Panc1 (cell line): ENCODE measurements at regions of chrX and their contacts with region 1.

Region 1: DNA sequence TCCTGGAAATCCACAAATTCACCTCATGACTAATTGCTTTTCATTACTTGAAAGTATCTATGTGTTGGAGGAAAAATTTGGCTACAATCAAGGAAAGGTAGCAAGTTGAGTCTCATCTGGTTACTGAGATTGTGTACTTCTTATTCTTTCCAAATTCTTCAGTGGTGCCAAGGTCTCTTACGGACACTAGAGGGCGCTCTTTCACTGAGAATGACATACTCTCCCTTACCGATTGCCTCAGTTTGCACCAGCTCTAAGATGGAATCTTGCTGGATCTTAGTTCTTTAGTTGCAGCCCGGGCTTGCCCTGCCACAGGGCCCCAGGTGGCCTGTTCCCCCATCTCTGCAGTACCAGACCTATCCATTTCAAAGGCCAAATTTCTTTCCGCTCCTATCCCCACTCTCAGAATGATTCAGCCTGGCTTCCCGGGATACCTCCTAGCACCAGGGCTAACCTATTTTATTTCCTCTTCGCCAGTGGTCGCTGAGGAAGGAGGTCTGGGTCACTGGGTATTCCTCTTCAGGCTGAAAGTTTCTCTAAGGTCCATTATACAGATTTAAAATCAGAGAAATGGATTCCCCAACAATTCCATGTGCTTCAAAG is 24.6 kb upstream of the GPR50 start:
- DNase-seq: peak; percentile 58
- ATAC-seq: peak; percentile 92
- H3K4me3 ChIP-seq: no peak overlapping the region
- H3K27ac ChIP-seq: no peak overlapping the region
- H3K4me1 ChIP-seq: peaks cover 7% of the 10 kb centered on the region; the same call in 1 of the 2 replicates
- H3K27me3 ChIP-seq: peaks cover 10% of the 10 kb centered on the region
- CTCF ChIP-seq: peak; percentile 79

Region 2: DNA sequence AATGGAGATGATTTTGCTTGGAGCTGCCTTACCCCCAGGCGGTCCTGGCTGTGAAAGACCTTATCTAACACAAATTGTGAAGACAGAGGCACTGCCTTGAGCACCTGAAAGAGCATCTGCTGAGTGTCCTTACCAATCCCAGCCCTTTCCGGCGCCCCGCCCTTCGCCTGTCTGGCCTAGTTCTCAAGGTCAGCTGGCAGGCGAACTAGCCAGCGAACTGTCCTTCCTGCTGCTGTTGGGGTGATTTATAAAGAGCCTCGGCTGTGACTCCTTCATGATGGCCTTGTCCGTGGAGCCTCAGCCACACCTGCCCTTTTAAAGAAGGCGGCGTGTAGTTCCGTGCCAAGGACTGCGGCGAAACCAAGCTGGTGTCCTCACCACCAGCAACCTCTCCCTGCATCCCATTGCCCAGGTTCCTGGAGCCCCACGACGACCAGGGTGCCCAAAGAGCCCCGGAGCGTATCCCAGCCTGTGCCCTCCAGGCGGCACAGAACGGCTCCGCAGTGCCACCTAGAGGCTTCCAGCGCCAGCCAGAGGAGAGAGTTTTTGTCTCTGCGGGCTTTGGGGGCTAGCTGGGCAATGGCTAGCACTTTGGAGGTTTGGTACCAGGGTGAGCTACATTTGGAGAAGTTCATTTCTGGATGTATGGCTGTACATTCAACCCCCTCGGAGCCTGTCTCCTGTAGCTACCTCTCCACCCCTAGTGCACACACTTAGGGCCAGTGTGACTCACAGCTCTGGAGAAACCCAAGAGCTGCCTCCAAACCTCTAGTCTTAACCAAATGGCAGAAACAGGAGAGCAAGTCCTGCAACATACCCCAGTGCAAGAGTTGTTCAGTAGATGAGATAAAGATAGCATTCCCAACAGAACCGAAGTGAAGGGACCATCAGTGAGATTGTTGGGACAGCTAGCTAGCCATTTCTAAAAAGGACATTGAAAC is 208.4 kb after region 1 on chrX:
- CTCF ChIA-PET with region 1: interaction called, 4 read pairs
- POLR2A ChIA-PET with region 1: no interaction called
- in situ Hi-C with region 1: no loop called
- intact Hi-C with region 1: loop called (anchors 5 kb)
- DNase-seq: no peak
- ATAC-seq: peak; percentile 97
- H3K4me3 ChIP-seq: peak overlapping the region; percentile 7 to 32; a peak in 3 of 4 replicates
- H3K27ac ChIP-seq: no peak overlapping the region
- H3K4me1 ChIP-seq: peaks cover 3% of the 10 kb centered on the region; the same call in 1 of the 2 replicates
- H3K27me3 ChIP-seq: peaks cover 9% of the 10 kb centered on the region
- CTCF ChIP-seq: peak; percentile 88

Region 3: GRCh38 chrX:151458824-151459223 is 307.1 kb after region 1 on chrX:
- CTCF ChIA-PET with region 1: no interaction called
- POLR2A ChIA-PET with region 1: no interaction called
- in situ Hi-C with region 1: no loop called
- intact Hi-C with region 1: loop called (anchors 10 kb)
- DNase-seq: no peak
- ATAC-seq: no peak
- H3K4me3 ChIP-seq: no peak overlapping the region
- H3K27ac ChIP-seq: no peak overlapping the region
- H3K4me1 ChIP-seq: no peaks in the 10 kb centered on the region
- H3K27me3 ChIP-seq: no peaks in the 10 kb centered on the region
- CTCF ChIP-seq: no peak

Region 4: GRCh38 chrX:151680805-151681204 is 529.0 kb after region 1 on chrX:
- CTCF ChIA-PET with region 1: no interaction called
- POLR2A ChIA-PET with region 1: no interaction called
- in situ Hi-C with region 1: no loop called
- intact Hi-C with region 1: loop called (anchors 1 kb)
- DNase-seq: peak; percentile 30
- ATAC-seq: peak; percentile 96
- H3K4me3 ChIP-seq: no peak overlapping the region
- H3K27ac ChIP-seq: no peak overlapping the region
- H3K4me1 ChIP-seq: no peaks in the 10 kb centered on the region
- H3K27me3 ChIP-seq: no peaks in the 10 kb centered on the region; the same call in 1 of the 2 replicates
- CTCF ChIP-seq: peak; percentile 75

Region 5: DNA sequence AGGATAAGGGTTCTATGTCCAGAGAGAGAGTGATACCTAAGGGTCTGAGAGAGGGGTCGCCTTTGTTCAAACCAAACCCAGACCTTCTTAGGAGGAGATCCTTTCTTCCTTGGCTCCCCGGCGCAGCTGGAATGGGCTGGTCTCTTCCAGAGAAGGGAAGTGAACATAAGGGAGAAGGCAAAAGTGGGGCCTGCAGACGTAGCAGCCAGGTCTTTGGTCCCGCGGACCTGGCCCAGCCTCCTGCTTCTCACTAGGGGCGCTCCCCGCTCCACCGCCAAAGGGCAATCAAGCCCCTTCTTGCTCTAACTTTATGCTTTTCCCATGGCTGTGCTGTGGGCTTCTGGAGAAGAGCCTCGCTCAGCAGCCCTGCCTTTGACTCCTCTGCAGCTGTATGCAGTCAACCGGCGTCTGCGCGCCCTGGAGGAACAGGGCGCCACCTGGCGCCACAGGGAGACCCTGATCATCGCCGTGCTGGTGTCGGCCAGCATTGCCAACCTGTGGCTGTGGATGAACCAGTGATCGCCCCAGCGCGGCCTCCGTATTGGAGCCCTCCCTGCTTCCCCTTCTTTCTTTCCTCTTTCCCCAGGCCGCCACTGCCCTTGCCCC is 570.6 kb after region 1 on chrX:
- CTCF ChIA-PET with region 1: no interaction called
- POLR2A ChIA-PET with region 1: no interaction called
- in situ Hi-C with region 1: no loop called
- intact Hi-C with region 1: loop called (anchors 5 kb)
- DNase-seq: no peak
- ATAC-seq: peak; percentile 85
- H3K4me3 ChIP-seq: no peak overlapping the region
- H3K27ac ChIP-seq: no peak overlapping the region
- H3K4me1 ChIP-seq: no peaks in the 10 kb centered on the region
- H3K27me3 ChIP-seq: no peaks in the 10 kb centered on the region
- CTCF ChIP-seq: peak; percentile 75

Region 6: DNA sequence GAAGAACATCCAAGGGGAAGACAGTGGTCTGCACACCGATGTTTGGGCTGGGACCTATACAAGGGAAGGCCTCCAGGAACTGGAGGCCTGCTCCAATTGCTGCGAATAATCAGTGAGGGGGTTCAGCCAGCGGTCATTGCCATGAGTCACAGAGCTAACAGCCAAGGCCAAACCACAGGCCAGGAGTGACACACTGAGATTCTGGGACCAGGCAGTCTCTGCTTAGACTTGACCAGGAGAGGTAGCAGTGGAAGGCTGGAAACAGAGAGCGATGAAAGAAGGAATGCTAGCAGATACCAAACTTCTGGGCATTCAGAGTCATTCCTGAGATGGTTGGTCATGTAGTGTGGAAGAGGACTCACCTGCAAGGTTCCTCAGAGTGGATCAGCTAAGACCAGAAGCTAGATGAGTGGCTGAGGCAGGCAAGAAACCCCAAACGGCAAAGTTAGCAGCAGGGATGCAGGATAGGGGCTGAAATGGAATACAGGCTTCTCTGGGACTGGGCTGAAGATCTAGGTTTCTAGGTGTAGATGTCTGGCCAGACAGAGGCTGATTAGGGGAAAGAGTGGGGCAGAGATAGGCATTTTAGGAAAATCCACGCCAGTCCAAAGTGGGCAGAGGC is 637.5 kb after region 1 on chrX:
- CTCF ChIA-PET with region 1: no interaction called
- POLR2A ChIA-PET with region 1: no interaction called
- in situ Hi-C with region 1: no loop called
- intact Hi-C with region 1: no loop called
- DNase-seq: no peak
- ATAC-seq: no peak
- H3K4me3 ChIP-seq: no peak overlapping the region
- H3K27ac ChIP-seq: no peak overlapping the region
- H3K4me1 ChIP-seq: no peaks in the 10 kb centered on the region; the same call in 1 of the 2 replicates
- H3K27me3 ChIP-seq: no peaks in the 10 kb centered on the region
- CTCF ChIP-seq: no peak

Region 7: GRCh38 chrX:152632445-152633097 is 1480.8 kb after region 1 on chrX:
- CTCF ChIA-PET with region 1: no interaction called
- POLR2A ChIA-PET with region 1: no interaction called
- in situ Hi-C with region 1: no loop called
- intact Hi-C with region 1: loop called (anchors 10 kb)
- DNase-seq: peak; percentile 13
- ATAC-seq: peak; percentile 72; the same call in 1 of the 2 replicates
- H3K4me3 ChIP-seq: no peak overlapping the region
- H3K27ac ChIP-seq: no peak overlapping the region
- H3K4me1 ChIP-seq: no peaks in the 10 kb centered on the region
- H3K27me3 ChIP-seq: peaks cover 6% of the 10 kb centered on the region
- CTCF ChIP-seq: peak; percentile 87